CD8-positive, alpha-beta T cell (primary cell): ENCODE measurements at regions of chr17 and their contacts with region 1.

Region 1: GRCh38 chr17:70144260-70144846 is 25.0 kb upstream of the KCNJ2 start:
- DNase-seq: peak in 2 of 9 experiments; percentile 4 to 29
- ATAC-seq: no peak
- H3K4me3 ChIP-seq: no peak overlapping the region
- H3K4me3 Mint-ChIP-seq: no peak overlapping the region
- H3K27ac ChIP-seq: no peak overlapping the region
- H3K27ac Mint-ChIP-seq: no peak overlapping the region
- H3K4me1 ChIP-seq: no peaks in the 10 kb centered on the region
- H3K4me1 Mint-ChIP-seq: no peaks in the 10 kb centered on the region
- H3K27me3 ChIP-seq: no peaks in the 10 kb centered on the region
- H3K27me3 Mint-ChIP-seq: peaks cover 5% of the 10 kb centered on the region
- CTCF ChIP-seq: peak; percentile 40

Region 2: GRCh38 chr17:69575346-69575761 is 569.0 kb before region 1 on chr17:
- CTCF ChIA-PET with region 1: no interaction called
- POLR2A ChIA-PET with region 1: no interaction called
- intact Hi-C with region 1: loop called in 1 of 2 experiments (anchors 2 kb)
- DNase-seq: no peak
- ATAC-seq: no peak
- H3K4me3 ChIP-seq: no peak overlapping the region
- H3K4me3 Mint-ChIP-seq: no peak overlapping the region
- H3K27ac ChIP-seq: no peak overlapping the region
- H3K27ac Mint-ChIP-seq: no peak overlapping the region
- H3K4me1 ChIP-seq: no peaks in the 10 kb centered on the region
- H3K4me1 Mint-ChIP-seq: peaks cover 3% of the 10 kb centered on the region
- H3K27me3 ChIP-seq: no peaks in the 10 kb centered on the region
- H3K27me3 Mint-ChIP-seq: peaks cover 13% of the 10 kb centered on the region
- CTCF ChIP-seq: no peak

Region 3: GRCh38 chr17:70168977-70169708 is 24.8 kb after region 1 on chr17 and contains the start of gene KCNJ2:
- CTCF ChIA-PET with region 1: no interaction called
- POLR2A ChIA-PET with region 1: no interaction called
- intact Hi-C with region 1: no loop called
- DNase-seq: peak in 6 of 9 experiments; percentile 3 to 57 (median 11)
- ATAC-seq: no peak
- H3K4me3 ChIP-seq: peak within 1 kb of the TSS; percentile 26 to 30
- H3K4me3 Mint-ChIP-seq: peak within 1 kb of the TSS; percentile 68
- H3K27ac ChIP-seq: no peak within 1 kb of the TSS
- H3K27ac Mint-ChIP-seq: no peak within 1 kb of the TSS
- H3K4me1 ChIP-seq: peaks cover 14% of the 10 kb centered on the region
- H3K4me1 Mint-ChIP-seq: peaks cover 18% of the 10 kb centered on the region
- H3K27me3 ChIP-seq: peaks cover 2 to 4% of the 10 kb centered on the region in 2 experiments
- H3K27me3 Mint-ChIP-seq: peaks cover 52% of the 10 kb centered on the region
- CTCF ChIP-seq: no peak
- total RNA-seq, gene KCNJ2: not detected